ENCODE measurements at regions of chr2 and their contacts with region 1.

Region 1: GRCh38 chr2:218659258-218659987 is at the starts of genes BCS1L and ZNF142:
- DNase-seq: peak; percentile 98
- H3K4me3 Mint-ChIP-seq: peak within 1 kb of the TSS; percentile 90
- H3K27ac Mint-ChIP-seq: peak within 1 kb of the TSS; percentile 93
- H3K4me1 Mint-ChIP-seq: peaks cover 33% of the 10 kb centered on the region
- H3K27me3 Mint-ChIP-seq: no peaks in the 10 kb centered on the region

Region 2: DNA sequence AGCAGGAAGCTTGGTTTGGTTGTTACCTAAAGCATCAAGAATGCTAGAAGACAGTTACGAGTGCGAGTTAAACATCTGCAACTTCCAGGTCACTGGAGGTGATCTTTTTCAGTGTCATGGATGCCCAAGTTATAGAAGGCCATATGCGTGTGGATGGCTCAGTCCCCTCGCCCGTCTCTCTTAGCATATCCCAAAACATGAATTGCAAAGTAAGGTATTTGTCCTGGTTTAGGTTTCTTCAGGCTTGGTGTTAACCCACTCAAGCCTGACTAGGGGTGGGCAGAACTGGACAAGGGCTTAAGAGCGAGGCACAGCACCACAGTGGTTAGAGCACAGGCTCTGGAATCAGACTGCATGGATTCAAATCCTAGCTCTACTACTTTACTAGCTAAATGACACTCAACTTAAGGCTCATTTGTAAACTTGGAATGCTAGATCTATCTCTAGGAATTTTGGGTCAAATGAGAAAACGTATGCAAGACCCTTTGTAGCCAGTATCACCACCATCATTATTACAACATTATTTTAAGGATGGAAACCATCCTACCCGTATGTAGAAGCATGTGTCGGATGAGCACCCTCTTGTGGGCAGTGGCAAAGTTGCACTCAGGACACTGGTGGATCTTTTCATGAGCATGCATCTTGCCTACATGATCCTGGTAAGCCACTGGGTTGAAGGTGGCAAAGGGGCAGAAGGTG is 11.2 kb before region 1 on chr2:
- CTCF ChIA-PET with region 1: interaction called, 42 read pairs
- DNase-seq: peak; percentile 72
- H3K4me3 Mint-ChIP-seq: no peak overlapping the region
- H3K27ac Mint-ChIP-seq: no peak overlapping the region
- H3K4me1 Mint-ChIP-seq: peaks cover 4% of the 10 kb centered on the region
- H3K27me3 Mint-ChIP-seq: no peaks in the 10 kb centered on the region

Region 3: DNA sequence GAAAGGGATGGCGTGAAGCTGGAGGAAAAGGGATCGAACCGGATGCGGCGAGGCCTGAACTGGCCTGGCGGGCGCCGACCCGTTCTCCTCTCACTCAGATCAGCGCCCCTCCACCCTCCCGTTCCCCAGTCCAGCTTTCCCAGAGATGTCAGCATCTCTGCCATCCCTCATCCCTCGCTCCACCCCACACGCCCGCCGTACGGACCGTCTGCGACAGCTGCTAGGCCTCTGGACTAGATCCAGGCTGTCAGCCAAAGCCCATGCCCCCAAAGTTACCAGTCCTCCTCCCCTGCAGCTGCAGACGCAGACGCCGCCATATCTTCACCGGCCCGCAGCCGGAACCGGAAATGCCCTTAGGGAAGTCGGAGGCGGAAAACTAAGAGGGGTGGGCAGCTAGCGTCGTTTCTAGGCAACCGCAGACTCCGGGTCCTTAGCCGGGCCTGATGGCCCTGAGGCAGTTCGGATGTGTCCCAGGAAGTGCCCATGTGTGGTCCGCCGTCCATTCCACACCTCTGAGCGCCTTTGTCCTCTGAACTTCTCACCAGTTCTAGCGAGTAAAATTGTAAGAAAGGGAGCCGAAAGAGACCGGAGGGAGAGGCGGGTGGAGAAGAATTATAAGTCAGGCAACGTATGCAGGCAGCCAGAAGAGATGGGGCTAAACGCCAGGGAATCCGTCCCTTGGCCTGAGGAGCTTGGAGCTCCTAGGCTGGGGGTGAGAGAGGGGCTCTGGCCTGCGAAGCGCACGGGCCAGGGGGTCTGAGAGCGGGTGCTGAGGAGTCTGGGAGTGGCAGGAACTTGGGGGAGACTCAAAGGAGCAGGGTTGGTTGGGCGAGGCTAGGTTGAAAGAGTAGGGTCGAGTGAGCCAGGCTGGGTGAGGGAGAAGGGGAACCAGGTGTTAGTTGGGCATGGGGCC is 12.5 kb after region 1 on chr2 and contains the starts of genes RNF25 and STK36:
- CTCF ChIA-PET with region 1: interaction called, 14 read pairs
- DNase-seq: peak; percentile 90
- H3K4me3 Mint-ChIP-seq: peak within 1 kb of the TSS; percentile 96
- H3K27ac Mint-ChIP-seq: peak within 1 kb of the TSS; percentile 80
- H3K4me1 Mint-ChIP-seq: peaks cover 24% of the 10 kb centered on the region
- H3K27me3 Mint-ChIP-seq: peaks cover 6% of the 10 kb centered on the region

Region 4: DNA sequence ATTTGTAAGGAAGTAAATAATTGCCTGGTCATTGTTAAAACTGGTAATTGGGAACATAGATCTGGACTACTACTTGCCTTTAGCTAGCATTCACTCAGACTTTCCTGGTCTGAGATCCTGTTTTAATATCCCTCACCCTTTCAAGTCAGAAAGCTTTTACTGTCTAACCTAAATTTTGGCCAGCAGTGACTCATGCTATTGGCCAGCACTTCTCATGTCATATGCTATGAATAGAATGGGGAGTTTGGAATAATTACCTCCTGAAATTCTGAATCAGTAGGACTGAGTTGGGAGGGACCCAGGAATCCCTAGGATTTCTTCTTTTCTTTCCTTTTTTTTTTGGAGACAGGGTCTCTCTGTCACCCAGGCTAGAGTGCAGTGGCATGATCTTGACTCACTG is 31.8 kb after region 1 on chr2:
- CTCF ChIA-PET with region 1: interaction called, 14 read pairs
- DNase-seq: no peak
- H3K4me3 Mint-ChIP-seq: no peak overlapping the region
- H3K27ac Mint-ChIP-seq: no peak overlapping the region
- H3K4me1 Mint-ChIP-seq: peaks cover 3% of the 10 kb centered on the region
- H3K27me3 Mint-ChIP-seq: no peaks in the 10 kb centered on the region

Region 5: GRCh38 chr2:218852911-218853667 is 193.7 kb after region 1 on chr2:
- CTCF ChIA-PET with region 1: interaction called, 37 read pairs
- DNase-seq: peak; percentile 72
- H3K4me3 Mint-ChIP-seq: no peak overlapping the region
- H3K27ac Mint-ChIP-seq: no peak overlapping the region
- H3K4me1 Mint-ChIP-seq: no peaks in the 10 kb centered on the region
- H3K27me3 Mint-ChIP-seq: peaks cover 83% of the 10 kb centered on the region

Measured in activated naive CD4-positive, alpha-beta T cell treated with anti-CD3 and anti-CD28 coated beads, Interleukin-2, amount 10 ng/mL, durations not matched to agents 7 days and 5 days (primary cell).